ENCODE measurements at regions of chr16 and their contacts with region 1.

Region 1: DNA sequence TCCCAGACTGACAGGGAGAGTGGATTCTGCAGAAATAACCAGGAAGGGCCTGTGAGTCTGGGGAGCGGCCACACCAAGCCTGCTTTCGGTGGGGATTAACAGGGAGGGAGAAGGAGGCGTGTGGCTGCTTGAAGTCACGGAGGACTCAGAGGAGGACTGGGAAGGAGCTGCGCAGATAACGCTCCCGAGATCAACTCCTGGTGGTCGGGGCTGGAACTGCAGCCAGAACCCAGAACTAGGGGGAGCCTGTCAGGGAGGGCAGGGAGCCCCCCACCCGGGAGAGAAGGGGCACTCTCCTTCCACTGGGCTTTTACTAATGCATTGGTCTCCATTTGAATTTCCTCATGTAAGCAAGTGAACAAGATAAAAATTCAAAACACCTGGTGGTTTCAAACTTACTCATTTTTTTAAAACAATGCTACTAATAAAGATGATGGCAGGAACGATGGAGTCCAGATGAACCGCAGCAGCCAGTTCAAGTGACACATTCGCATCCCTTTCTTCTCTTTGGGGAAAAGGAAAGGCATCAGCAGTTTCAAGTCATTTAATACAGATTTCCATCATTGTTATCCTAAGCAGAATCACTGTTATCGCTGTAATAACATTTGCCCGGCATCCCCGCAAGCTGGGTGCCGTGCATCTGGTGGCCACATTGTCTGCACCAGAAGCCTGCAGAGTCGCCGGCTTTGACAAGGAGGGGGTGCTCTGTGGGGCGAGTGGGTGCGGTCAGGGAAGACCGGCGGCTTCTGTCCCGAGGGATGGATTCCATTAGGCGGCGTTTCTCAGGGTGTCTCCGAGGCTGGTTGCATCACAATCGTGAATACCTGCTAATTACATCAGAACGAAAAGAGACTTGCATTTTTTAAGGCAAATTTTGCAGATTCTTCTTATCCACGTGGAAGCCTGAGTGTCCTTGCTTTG is 183.0 kb downstream of the FOXL1 start:
- DNase-seq: peak; percentile 62 to 69
- ATAC-seq: peak; percentile 90 to 96
- H3K4me3 ChIP-seq: peak overlapping the region; percentile 24; the same call in 1 of the 3 replicates
- H3K27ac ChIP-seq: peak overlapping the region; percentile 5 to 69; a peak in 3 of 6 replicates
- H3K4me1 ChIP-seq: no peaks in the 10 kb centered on the region
- CTCF ChIP-seq: peak; percentile 56
- EP300 ChIP-seq: no peak
- POLR2A ChIP-seq: no peak
- RAD21 ChIP-seq: peak; percentile 53 to 58

Region 2: DNA sequence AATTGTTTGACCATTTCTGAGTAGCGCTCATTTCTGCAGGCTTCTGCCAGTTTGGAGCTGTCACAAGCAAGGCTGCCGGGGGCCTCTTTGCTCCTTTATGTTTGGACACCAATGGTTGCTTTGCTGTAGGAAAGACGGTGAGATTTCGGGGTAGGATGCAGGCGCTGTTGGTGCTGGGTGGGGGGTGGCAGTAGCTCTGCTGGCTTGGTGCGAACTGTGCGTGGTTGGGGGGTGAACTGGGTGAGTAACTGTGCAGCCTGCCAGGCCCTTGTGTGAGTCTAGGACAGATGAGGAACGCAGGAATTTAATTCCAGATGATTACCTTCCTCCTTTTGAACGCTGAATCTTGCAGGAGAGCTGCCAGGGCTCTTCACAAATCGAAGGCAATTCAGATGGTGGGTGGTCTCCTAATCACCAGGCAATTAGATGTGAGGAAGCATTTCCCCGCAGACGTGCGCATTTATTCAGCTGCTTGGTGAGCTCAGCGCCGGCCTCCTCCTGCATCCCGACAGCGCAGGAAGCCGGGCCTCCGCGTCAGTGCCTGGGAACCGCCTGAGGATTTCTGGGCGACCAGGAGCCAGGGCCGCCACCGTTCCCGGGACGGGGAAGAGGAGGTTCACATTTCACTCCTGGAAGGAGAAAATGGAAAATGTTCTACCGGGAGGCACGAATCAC is 28.6 kb before region 1 on chr16:
- CTCF ChIA-PET with region 1: no interaction called
- POLR2A ChIA-PET with region 1: no interaction called
- DNase-seq: no peak
- ATAC-seq: no peak
- H3K4me3 ChIP-seq: no peak overlapping the region
- H3K27ac ChIP-seq: no peak overlapping the region
- H3K4me1 ChIP-seq: no peaks in the 10 kb centered on the region
- CTCF ChIP-seq: no peak
- EP300 ChIP-seq: no peak
- POLR2A ChIP-seq: no peak
- RAD21 ChIP-seq: no peak

Region 3: GRCh38 chr16:86751076-86752030 is 10.0 kb before region 1 on chr16:
- CTCF ChIA-PET with region 1: interaction called, 19 read pairs
- POLR2A ChIA-PET with region 1: no interaction called
- DNase-seq: peak in 1 of 2 experiments; percentile 13
- ATAC-seq: no peak; a peak in 1 of 6 replicates
- H3K4me3 ChIP-seq: no peak overlapping the region
- H3K27ac ChIP-seq: peak overlapping the region; percentile 44 to 54; a peak in 3 of 6 replicates
- H3K4me1 ChIP-seq: peaks cover 10% of the 10 kb centered on the region
- CTCF ChIP-seq: no peak
- EP300 ChIP-seq: no peak
- POLR2A ChIP-seq: no peak
- RAD21 ChIP-seq: no peak

Region 4: GRCh38 chr16:86772671-86773353 is 11.4 kb after region 1 on chr16:
- CTCF ChIA-PET with region 1: interaction called, 17 read pairs
- POLR2A ChIA-PET with region 1: no interaction called
- DNase-seq: no peak
- ATAC-seq: no peak
- H3K4me3 ChIP-seq: no peak overlapping the region
- H3K27ac ChIP-seq: no peak overlapping the region
- H3K4me1 ChIP-seq: peaks cover 9% of the 10 kb centered on the region; the same call in 2 of the 3 replicates
- CTCF ChIP-seq: no peak
- EP300 ChIP-seq: no peak
- POLR2A ChIP-seq: no peak
- RAD21 ChIP-seq: no peak